Sciatic nerve (tissue), 2 donors: ENCODE measurements at regions of chr1 and their contacts with region 1.

Region 1: GRCh38 chr1:63442141-63442475 is 74.7 kb downstream of the ALG6 start:
- DNase-seq: no peak
- ATAC-seq: peak; percentile 24

Region 2: DNA sequence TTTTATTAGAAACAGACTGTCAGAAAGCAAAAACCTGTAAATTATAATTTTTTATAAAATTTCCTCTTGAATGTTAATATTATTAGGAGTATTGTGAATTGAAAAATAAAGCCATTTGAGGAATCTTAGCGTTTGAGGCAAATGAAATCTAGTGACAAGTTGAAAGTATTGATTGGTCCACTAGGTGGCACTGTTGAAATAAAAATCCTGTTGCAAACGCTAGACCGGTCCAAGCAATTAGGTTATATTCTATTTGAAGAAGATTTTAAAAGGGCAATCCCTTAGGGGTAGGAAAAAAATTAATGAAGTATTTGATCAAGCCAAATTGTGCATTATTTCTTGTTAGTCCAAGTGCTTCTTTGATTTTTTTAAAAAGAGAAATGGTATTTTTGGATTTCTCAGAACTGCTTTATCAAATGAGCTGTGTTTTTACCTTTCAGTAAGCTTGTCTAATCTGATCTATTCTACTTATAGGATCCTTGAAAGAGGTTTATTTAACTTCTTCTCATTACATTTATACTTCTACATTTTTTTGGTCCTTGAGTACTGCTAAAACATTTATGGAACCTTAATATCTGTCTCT is 600.4 kb before region 1 on chr1:
- intact Hi-C with region 1: loop called (anchors 10 kb)
- DNase-seq: no peak
- ATAC-seq: peak; percentile 68

Region 3: DNA sequence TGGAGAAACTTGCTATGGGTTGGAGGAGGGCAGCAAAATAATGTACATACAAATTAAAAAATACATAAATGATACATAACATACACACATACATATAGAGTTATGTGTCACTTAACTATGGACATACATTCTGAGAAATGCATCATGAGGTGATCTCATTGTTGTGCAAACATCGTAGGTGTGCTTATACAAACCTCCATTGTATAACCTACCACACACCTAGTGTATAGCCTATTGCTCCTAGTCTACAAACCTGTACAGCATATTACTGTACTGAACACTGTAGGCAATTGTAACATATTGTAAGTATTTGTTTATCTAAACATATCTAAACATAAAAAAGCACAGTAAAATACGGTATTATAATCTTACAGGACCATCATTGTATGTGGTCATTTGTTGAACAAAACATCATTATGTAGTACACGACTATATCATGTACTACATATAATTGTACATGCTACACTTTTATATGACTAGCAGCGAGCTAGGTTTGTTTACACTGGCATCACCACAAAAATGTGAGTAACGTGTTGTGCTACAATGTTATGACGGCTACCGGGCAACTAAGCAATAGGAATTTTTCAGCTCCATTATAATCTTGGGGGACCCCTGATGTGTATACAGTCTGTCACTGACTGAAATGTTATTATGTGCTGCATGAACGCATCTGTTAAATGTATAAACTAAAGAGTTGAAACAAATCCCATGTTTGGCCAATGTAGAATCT is 45.4 kb after region 1 on chr1:
- intact Hi-C with region 1: no loop called
- DNase-seq: no peak
- ATAC-seq: no peak

Region 4: DNA sequence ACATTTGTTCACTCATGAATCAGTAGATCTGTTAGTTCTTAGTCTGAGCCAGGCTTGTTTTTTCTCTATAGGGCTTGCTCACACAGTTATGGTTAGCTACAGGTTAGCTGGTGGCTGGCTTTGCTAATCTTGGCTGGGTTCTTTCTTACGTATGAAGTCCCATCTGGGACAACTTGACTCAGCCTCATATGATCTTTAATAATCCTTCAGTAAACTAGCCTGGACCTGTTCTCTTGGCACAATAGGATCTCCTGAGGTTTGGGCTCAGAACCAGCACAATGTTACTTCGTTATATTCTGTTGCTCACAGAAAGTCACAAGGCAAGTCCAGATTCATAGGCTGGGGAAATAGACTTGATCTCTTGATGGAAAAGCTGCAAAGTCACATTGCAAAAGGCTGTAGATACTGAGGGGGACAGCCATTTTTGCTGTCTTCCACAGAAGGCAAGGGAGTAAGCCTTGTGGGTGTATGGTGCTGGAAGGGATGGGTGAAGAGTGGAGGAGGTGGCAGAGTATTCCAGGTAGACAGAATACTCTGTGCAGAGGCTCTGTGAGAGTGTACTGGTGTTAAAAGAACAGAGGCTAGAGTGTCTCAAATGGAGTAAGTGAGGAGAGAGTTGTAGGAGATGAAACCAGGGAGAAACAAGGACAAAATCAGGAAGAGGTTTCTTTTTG is 105.7 kb after region 1 on chr1:
- intact Hi-C with region 1: no loop called
- DNase-seq: no peak
- ATAC-seq: peak; percentile 94